ENCODE measurements at regions of chr18 and their contacts with region 1.

Region 1: GRCh38 chr18:27599202-27599829 is 414.2 kb upstream of the CHST9 start:
- DNase-seq: no peak
- H3K4me3 ChIP-seq: no peak overlapping the region
- H3K27ac ChIP-seq: no peak overlapping the region
- H3K4me1 ChIP-seq: no peaks in the 10 kb centered on the region
- H3K27me3 ChIP-seq: no peaks in the 10 kb centered on the region
- CTCF ChIP-seq: peak in 10 of 11 experiments; percentile 38 to 76 (median 73)
- POLR2A ChIP-seq: no peak

Region 2: DNA sequence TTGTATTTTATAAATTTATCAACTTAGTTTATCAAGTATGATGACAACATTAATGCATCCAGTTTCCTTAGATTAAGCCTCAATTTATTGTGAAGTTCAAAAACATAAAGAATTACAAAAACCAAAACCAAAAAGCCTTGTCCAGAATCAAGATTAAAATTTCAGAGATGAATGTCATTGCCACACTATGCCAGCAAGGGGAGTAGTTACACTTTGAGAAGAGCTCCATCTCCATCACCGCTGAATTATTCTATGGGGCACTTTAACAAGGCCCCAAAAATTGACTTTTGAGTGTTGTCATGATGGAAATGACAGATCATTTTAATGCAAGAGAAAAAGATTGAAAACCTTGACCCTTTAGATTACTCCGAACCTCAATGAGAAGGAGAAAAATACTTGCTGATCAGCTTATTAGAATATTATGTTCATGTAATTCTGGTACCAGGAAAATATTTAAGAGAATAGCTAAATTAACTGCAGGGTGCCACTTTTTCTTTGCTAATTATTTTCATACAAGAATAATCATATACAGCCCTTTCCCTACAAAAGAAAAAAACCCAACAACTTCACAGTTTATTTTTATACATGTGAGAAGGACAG is 581.3 kb before region 1 on chr18:
- intact Hi-C with region 1: loop called (anchors 5 kb)
- DNase-seq: no peak
- H3K4me3 ChIP-seq: no peak overlapping the region
- H3K27ac ChIP-seq: no peak overlapping the region
- H3K4me1 ChIP-seq: no peaks in the 10 kb centered on the region
- H3K27me3 ChIP-seq: no peaks in the 10 kb centered on the region
- CTCF ChIP-seq: peak in 8 of 11 experiments; percentile 9 to 40 (median 32)
- POLR2A ChIP-seq: no peak

Region 3: GRCh38 chr18:27363872-27364271 is 235.4 kb before region 1 on chr18:
- intact Hi-C with region 1: loop called (anchors 10 kb)
- DNase-seq: no peak
- H3K4me3 ChIP-seq: no peak overlapping the region
- H3K27ac ChIP-seq: no peak overlapping the region
- H3K4me1 ChIP-seq: no peaks in the 10 kb centered on the region
- H3K27me3 ChIP-seq: no peaks in the 10 kb centered on the region
- CTCF ChIP-seq: peak in 1 of 11 experiments; percentile 15
- POLR2A ChIP-seq: no peak

Region 4: GRCh38 chr18:27483276-27483675 is 116.0 kb before region 1 on chr18:
- intact Hi-C with region 1: no loop called
- DNase-seq: no peak
- H3K4me3 ChIP-seq: no peak overlapping the region
- H3K27ac ChIP-seq: no peak overlapping the region
- H3K4me1 ChIP-seq: no peaks in the 10 kb centered on the region
- H3K27me3 ChIP-seq: no peaks in the 10 kb centered on the region
- CTCF ChIP-seq: no peak
- POLR2A ChIP-seq: no peak

Measured in spleen (tissue), 13 donors.